ENCODE measurements at regions of chr15 and their contacts with region 1.

Region 1: DNA sequence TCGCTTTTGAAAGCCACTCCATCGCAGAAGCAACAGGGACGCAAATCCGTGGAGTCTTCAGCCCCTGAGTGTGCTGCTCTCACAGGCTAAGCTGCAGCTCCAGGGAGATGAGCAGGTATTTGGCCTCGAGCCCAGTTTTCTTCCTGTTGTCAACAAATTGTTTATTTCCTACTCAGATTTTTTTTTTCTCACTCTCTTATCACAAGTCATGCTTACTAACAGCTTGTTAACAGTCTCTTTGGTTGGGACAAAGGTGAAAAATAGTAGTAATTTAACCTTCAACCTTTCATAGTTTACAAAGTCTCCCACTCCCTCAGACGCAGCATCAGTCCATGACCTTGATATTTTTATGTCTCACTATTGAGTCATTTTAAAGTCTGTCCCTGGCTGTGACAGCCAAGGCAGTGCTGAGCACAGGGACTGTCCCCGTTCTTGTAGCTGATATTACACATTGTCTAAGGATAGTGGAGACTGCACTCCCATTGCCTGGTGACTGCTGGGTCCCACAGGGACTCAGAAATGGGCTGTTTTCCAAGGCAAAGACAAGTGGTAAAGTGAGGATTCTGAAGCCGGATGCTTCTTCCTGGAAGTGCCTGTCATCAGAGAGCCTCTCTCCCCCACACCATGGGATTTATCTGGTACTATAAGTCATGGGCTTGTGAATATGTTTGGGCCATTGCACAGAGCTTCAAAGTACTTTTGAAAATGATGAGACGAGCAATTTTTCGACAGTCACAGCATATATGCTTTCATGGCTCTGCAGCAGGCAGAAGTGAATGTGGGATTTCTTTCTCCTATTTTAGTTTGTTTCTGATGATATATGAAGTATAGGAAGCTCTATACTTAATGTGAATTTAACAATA is 59.8 kb upstream of the UNC13C start:
- DNase-seq: peak in 4 of 5 donors; percentile 33 to 37 (median 35)
- ATAC-seq: peak in 2 of 4 donors; percentile 27 to 81
- H3K4me3 ChIP-seq: no peak overlapping the region
- H3K27ac ChIP-seq: no peak overlapping the region
- H3K4me1 ChIP-seq: no peaks in the 10 kb centered on the region
- H3K27me3 ChIP-seq: no peaks in the 10 kb centered on the region
- CTCF ChIP-seq: no peak
- POLR2A ChIP-seq: no peak

Region 2: GRCh38 chr15:53851110-53851848 is 67.1 kb before region 1 on chr15:
- intact Hi-C with region 1: loop called in 1 of 10 experiments (anchors 10 kb)
- DNase-seq: no peak
- ATAC-seq: no peak
- H3K4me3 ChIP-seq: no peak overlapping the region
- H3K27ac ChIP-seq: no peak overlapping the region
- H3K4me1 ChIP-seq: no peaks in the 10 kb centered on the region
- H3K27me3 ChIP-seq: no peaks in the 10 kb centered on the region
- CTCF ChIP-seq: no peak
- POLR2A ChIP-seq: no peak

Region 3: DNA sequence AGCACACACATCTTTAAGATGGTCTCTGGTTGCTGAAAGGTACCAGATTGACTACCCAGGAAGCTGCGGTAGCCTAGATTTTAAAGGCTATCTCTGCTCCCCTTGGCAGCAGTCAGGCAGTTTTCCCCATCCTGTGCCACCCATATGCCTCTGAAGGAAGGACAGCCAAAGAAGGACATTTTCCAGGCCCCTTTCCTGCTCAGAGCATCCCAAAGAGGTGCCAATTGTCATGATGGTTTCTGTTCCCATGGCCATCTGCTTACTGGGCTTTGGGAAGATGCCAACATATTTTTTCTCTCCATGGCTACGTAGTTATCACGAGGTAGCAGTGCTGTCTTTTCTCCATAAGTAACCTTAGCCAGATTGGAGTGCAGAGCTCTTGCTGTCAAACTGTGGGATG is 99.5 kb after region 1 on chr15:
- intact Hi-C with region 1: no loop called
- DNase-seq: no peak
- ATAC-seq: no peak
- H3K4me3 ChIP-seq: no peak overlapping the region
- H3K27ac ChIP-seq: no peak overlapping the region
- H3K4me1 ChIP-seq: no peaks in the 10 kb centered on the region
- H3K27me3 ChIP-seq: no peaks in the 10 kb centered on the region
- CTCF ChIP-seq: no peak
- POLR2A ChIP-seq: no peak

Measured in heart left ventricle (tissue), 16 donors.